ENCODE measurements at regions of chr12 and their contacts with region 1.

Region 1: DNA sequence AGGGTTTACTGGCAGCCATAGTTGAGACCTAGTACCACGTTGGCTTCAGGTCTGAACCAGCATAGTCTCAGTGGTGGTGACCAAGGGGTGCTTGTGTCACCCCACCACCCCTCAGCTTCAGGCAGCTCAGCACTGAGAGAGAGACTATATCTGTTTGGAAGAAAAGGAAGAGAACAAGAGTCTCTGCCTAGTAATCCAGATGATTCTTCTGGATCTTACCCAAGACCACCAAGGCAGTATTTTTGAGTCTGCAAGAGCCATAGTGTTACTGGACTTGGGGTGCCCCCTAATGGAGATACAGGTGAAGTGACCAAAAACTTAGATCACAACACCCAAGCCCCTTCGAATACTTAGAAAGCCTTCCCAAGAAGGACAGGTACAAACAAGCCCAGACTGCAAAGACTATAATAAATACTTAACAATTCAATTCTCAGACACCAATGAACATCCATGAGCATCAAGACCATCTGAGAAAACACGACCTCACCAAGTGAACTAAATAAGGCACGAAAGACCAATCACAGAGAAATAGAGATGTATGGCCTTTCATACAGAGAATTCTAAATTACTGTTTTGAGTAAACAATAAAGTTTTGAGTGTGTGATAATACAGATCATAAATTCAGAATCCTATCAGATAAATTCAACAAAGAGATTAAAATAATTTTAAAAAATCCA is 107.0 kb downstream of the HELB start:
- DNase-seq: peak; percentile 40
- H3K4me3 Mint-ChIP-seq: no peak overlapping the region
- H3K27ac Mint-ChIP-seq: no peak overlapping the region
- H3K4me1 Mint-ChIP-seq: no peaks in the 10 kb centered on the region
- H3K27me3 Mint-ChIP-seq: peaks cover 15% of the 10 kb centered on the region

Region 2: GRCh38 chr12:66241061-66242043 is 168.0 kb before region 1 on chr12:
- CTCF ChIA-PET with region 1: no interaction called
- POLR2A ChIA-PET with region 1: no interaction called
- DNase-seq: no peak
- H3K4me3 Mint-ChIP-seq: no peak overlapping the region
- H3K27ac Mint-ChIP-seq: no peak overlapping the region
- H3K4me1 Mint-ChIP-seq: no peaks in the 10 kb centered on the region
- H3K27me3 Mint-ChIP-seq: peaks cover 21% of the 10 kb centered on the region

Region 3: GRCh38 chr12:66269757-66270383 is 139.5 kb before region 1 on chr12:
- CTCF ChIA-PET with region 1: interaction called, 82 read pairs
- POLR2A ChIA-PET with region 1: no interaction called
- DNase-seq: peak; percentile 29
- H3K4me3 Mint-ChIP-seq: no peak overlapping the region
- H3K27ac Mint-ChIP-seq: no peak overlapping the region
- H3K4me1 Mint-ChIP-seq: peaks cover 6% of the 10 kb centered on the region
- H3K27me3 Mint-ChIP-seq: no peaks in the 10 kb centered on the region

Region 4: GRCh38 chr12:66279123-66279712 is 130.1 kb before region 1 on chr12:
- CTCF ChIA-PET with region 1: interaction called, 82 read pairs
- POLR2A ChIA-PET with region 1: no interaction called
- DNase-seq: peak; percentile 58
- H3K4me3 Mint-ChIP-seq: no peak overlapping the region
- H3K27ac Mint-ChIP-seq: no peak overlapping the region
- H3K4me1 Mint-ChIP-seq: peaks cover 25% of the 10 kb centered on the region
- H3K27me3 Mint-ChIP-seq: no peaks in the 10 kb centered on the region

Region 5: DNA sequence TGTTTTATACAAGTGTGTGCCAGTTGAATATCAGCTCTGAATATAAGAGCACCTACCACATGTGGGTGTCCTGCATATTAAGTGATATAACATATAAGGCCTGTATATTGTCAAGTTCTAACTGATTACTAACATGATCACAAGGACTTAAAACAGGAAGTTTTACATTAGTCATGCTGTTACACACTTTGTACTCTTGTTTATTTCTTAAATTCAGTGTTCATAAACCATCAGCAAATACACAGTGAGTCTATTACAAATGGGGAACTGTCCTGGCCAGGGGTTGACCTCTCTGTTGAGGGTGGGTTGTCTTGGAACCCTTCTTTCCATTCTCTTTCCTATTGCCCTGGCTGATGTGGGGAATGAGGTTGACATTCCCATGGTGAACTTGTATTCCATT is 87.9 kb before region 1 on chr12:
- CTCF ChIA-PET with region 1: no interaction called
- POLR2A ChIA-PET with region 1: no interaction called
- DNase-seq: no peak
- H3K4me3 Mint-ChIP-seq: no peak overlapping the region
- H3K27ac Mint-ChIP-seq: no peak overlapping the region
- H3K4me1 Mint-ChIP-seq: peaks cover 16% of the 10 kb centered on the region
- H3K27me3 Mint-ChIP-seq: no peaks in the 10 kb centered on the region

Region 6: GRCh38 chr12:66438593-66438992 is 29.3 kb after region 1 on chr12:
- CTCF ChIA-PET with region 1: no interaction called
- POLR2A ChIA-PET with region 1: no interaction called
- DNase-seq: no peak
- H3K4me3 Mint-ChIP-seq: no peak overlapping the region
- H3K27ac Mint-ChIP-seq: no peak overlapping the region
- H3K4me1 Mint-ChIP-seq: no peaks in the 10 kb centered on the region
- H3K27me3 Mint-ChIP-seq: peaks cover 6% of the 10 kb centered on the region

Measured in activated CD4-positive, alpha-beta memory T cell treated with anti-CD3 and anti-CD28 coated beads, Interleukin-2, amount 10 ng/mL, durations not matched to agents 7 days and 5 days (primary cell).